Dendritic cell treated with granulocyte-macrophage colony-stimulating factor and Interleukin-4, amounts not matched to agents 40 ng/mL and 50 ng/mL, for 4 days (primary cell): ENCODE measurements at regions of chr19 and their contacts with region 1.

Region 1: GRCh38 chr19:53906211-53907192 is 2.6 kb upstream of the CACNG7 start:
- H3K4me3 Mint-ChIP-seq: no peak overlapping the region
- H3K27ac Mint-ChIP-seq: no peak overlapping the region
- H3K4me1 Mint-ChIP-seq: peaks cover 42% of the 10 kb centered on the region
- H3K27me3 Mint-ChIP-seq: peaks cover 78% of the 10 kb centered on the region

Region 2: DNA sequence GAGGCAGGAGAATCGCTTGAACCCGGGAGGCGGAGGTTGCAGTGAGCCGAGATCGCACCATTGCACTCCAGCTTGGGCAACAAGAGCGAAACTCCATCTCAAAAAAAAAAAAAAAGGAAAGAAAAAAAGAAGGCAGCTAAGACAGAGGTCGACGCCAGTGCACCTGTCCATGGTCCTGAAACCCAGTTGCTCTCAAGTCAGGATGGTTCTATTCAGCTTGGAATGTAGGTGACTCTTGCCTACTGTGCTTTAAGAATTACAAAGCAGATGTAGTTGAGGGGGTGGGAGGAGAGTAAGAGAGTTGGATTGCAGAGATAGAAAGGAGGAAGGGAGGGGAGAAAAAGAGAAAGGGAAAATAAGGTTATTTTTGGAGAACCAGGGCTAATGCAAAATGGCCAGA is 21.2 kb after region 1 on chr19:
- intact Hi-C with region 1: loop called (anchors 1 kb)
- H3K4me3 Mint-ChIP-seq: no peak overlapping the region
- H3K27ac Mint-ChIP-seq: no peak overlapping the region
- H3K4me1 Mint-ChIP-seq: no peaks in the 10 kb centered on the region
- H3K27me3 Mint-ChIP-seq: peaks cover 21% of the 10 kb centered on the region